ENCODE measurements at regions of chr16 and their contacts with region 1.

Region 1: DNA sequence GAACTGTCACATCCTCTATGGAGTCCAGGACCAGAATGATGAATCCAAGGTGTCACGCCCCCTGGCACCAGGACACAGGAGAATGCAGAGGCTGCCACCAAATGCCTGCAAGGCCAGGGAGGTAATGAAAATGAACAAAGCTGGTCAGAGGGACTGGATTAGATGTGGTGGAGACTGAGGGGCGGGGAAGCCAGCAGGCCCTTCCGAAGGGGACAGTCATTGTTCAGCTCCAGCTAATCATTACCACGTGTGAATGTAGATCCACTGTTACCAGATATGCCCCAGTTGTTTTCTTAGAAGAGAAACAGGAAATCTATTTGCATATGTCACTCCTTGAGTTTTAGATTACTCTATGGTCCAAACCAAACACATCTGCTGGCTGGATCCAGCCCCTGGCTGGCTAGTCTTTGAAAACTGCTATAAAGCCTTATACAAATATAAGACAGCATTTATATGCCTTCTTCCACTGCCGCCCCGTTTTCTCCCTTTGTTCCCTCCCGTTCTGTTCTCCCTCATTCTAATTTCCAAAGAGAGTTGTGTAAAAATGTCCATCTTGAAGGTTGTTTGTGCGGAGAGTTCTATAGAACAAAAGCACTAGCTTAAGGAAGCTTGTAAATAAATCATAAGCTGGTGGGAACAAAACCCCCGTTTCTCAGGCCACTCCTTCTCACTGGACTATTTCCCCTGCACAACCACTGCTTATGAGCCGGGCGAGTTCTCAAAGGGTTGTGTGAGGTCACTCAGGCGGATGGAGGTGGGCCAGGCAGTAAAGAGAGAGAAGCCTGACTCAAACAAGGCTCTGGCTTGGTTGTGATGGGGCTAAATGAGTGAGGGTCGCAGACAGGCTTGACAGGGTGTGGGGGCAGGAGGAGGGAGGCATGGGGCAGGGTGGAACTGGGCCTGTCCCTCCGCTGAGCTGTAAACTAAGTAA is 14.2 kb downstream of the CRYM start:
- DNase-seq: no peak
- H3K4me3 ChIP-seq: no peak overlapping the region
- H3K27ac ChIP-seq: no peak overlapping the region
- H3K4me1 ChIP-seq: no peaks in the 10 kb centered on the region
- H3K27me3 ChIP-seq: no peaks in the 10 kb centered on the region
- CTCF ChIP-seq: no peak

Region 2: DNA sequence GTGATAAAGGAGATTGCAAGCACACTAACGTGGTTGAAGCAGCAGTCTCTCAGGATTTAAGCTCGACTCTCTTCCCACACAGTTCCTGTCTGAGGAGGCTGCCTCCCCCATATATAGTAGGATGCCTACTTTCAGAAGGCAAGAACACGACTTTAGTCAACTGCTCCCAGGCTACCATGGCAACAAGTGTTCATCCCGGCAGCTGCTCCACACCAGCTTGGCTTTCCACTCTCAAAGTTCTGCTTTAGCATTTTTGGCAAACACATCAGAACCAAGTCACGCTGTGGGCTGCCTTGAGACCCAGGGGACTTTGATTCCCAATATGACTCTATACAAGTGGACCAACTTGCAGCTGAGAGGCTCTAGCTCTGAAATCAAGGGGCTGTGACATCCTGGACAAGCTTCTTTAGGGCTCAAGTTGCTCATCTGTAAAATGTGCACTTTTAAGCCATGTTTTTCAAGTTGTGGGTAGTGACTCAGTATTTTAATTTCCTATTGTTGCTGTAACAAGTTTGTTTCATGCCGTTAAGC is 69.1 kb before region 1 on chr16:
- CTCF ChIA-PET with region 1: no interaction called
- dilution Hi-C with region 1: no loop called
- in situ Hi-C with region 1: loop called in 1 of 2 experiments (anchors 10 kb)
- intact Hi-C with region 1: no loop called
- DNase-seq: peak; percentile 39
- H3K4me3 ChIP-seq: no peak overlapping the region
- H3K27ac ChIP-seq: no peak overlapping the region
- H3K4me1 ChIP-seq: no peaks in the 10 kb centered on the region
- H3K27me3 ChIP-seq: no peaks in the 10 kb centered on the region
- CTCF ChIP-seq: no peak

Region 3: GRCh38 chr16:21302898-21303528 is 39.1 kb after region 1 on chr16:
- CTCF ChIA-PET with region 1: no interaction called
- dilution Hi-C with region 1: no loop called
- in situ Hi-C with region 1: no loop called
- intact Hi-C with region 1: no loop called
- DNase-seq: peak; percentile 99
- H3K4me3 ChIP-seq: peak overlapping the region; percentile 57 to 82 (median 68)
- H3K27ac ChIP-seq: peak overlapping the region; percentile 98
- H3K4me1 ChIP-seq: peaks cover 13% of the 10 kb centered on the region
- H3K27me3 ChIP-seq: no peaks in the 10 kb centered on the region
- CTCF ChIP-seq: no peak